Endothelial cell of umbilical vein (primary cell): ENCODE measurements at regions of chr17 and their contacts with region 1.

Region 1: GRCh38 chr17:64420143-64420971 is 28.6 kb upstream of the MILR1 start:
- DNase-seq: peak; percentile 76
- H3K4me3 ChIP-seq: no peak overlapping the region
- H3K27ac ChIP-seq: no peak overlapping the region
- H3K4me1 ChIP-seq: peaks cover 6% of the 10 kb centered on the region
- H3K27me3 ChIP-seq: no peaks in the 10 kb centered on the region
- CTCF ChIP-seq: peak; percentile 74 to 75
- POLR2A ChIP-seq: no peak

Region 2: GRCh38 chr17:64306850-64307463 is 113.4 kb before region 1 on chr17:
- CTCF ChIA-PET with region 1: interaction called, 203 read pairs
- POLR2A ChIA-PET with region 1: no interaction called
- dilution Hi-C with region 1: no loop called
- intact Hi-C with region 1: loop called (anchors 1 kb)
- DNase-seq: peak; percentile 84
- H3K4me3 ChIP-seq: no peak overlapping the region
- H3K27ac ChIP-seq: no peak overlapping the region
- H3K4me1 ChIP-seq: peaks cover 5% of the 10 kb centered on the region
- H3K27me3 ChIP-seq: no peaks in the 10 kb centered on the region
- CTCF ChIP-seq: peak; percentile 67 to 70
- POLR2A ChIP-seq: no peak

Region 3: GRCh38 chr17:64343853-64344637 is 76.3 kb before region 1 on chr17:
- CTCF ChIA-PET with region 1: interaction called, 16 read pairs
- POLR2A ChIA-PET with region 1: no interaction called
- dilution Hi-C with region 1: no loop called
- intact Hi-C with region 1: no loop called
- DNase-seq: peak; percentile 99
- H3K4me3 ChIP-seq: no peak overlapping the region
- H3K27ac ChIP-seq: peak overlapping the region; percentile 89
- H3K4me1 ChIP-seq: peaks cover 41% of the 10 kb centered on the region
- H3K27me3 ChIP-seq: no peaks in the 10 kb centered on the region
- CTCF ChIP-seq: no peak
- POLR2A ChIP-seq: peak; percentile 38

Region 4: DNA sequence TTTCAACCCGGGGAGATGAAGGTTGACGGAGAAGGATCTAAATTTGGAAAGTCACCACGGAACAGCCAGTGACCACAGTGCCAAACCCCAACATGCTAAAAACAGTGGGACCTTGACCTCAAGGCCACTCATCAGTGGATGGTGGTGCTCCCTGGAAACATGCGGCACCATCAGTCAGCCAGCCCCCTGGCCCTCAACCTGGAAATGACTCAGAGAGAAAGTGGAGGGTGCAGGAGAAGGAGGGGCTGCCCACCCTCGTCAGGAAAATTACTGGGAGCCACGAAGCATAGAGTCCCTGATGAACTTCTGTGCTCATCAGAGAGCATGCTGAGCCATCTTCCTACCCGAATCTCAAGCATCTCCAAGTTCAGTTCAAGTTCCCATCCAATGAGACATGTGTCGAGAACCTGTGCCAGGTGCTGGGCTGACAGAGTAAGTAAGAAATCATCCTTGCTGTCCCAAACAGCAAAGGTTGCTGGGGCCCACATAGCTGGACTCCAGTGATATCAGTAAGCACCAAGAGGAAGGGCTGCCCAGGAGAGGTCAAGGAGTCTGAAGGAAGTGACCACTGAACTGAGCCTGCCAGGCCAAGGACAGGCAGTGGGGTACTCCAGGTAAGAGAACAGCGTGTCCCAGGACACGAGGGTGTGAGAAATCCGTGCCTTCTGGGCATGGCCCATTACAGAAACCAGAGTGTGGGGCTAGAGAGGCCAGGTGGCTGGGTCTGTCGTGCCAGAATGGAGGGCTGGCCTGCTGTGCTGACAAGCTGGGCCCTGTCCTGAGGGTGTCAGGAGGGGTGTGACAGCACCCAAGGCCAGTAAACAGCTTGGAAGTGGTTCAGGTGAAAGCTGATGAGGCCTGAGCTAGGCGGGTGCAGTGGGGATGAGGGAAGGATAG is 34.9 kb before region 1 on chr17:
- CTCF ChIA-PET with region 1: interaction called, 60 read pairs
- POLR2A ChIA-PET with region 1: no interaction called
- dilution Hi-C with region 1: no loop called
- intact Hi-C with region 1: loop called (anchors 1 kb)
- DNase-seq: peak; percentile 96
- H3K4me3 ChIP-seq: peak overlapping the region in 2 of 3 experiments; percentile 10 to 27
- H3K27ac ChIP-seq: peak overlapping the region; percentile 98
- H3K4me1 ChIP-seq: peaks cover 73% of the 10 kb centered on the region
- H3K27me3 ChIP-seq: no peaks in the 10 kb centered on the region
- CTCF ChIP-seq: no peak
- POLR2A ChIP-seq: peak; percentile 41

Region 5: DNA sequence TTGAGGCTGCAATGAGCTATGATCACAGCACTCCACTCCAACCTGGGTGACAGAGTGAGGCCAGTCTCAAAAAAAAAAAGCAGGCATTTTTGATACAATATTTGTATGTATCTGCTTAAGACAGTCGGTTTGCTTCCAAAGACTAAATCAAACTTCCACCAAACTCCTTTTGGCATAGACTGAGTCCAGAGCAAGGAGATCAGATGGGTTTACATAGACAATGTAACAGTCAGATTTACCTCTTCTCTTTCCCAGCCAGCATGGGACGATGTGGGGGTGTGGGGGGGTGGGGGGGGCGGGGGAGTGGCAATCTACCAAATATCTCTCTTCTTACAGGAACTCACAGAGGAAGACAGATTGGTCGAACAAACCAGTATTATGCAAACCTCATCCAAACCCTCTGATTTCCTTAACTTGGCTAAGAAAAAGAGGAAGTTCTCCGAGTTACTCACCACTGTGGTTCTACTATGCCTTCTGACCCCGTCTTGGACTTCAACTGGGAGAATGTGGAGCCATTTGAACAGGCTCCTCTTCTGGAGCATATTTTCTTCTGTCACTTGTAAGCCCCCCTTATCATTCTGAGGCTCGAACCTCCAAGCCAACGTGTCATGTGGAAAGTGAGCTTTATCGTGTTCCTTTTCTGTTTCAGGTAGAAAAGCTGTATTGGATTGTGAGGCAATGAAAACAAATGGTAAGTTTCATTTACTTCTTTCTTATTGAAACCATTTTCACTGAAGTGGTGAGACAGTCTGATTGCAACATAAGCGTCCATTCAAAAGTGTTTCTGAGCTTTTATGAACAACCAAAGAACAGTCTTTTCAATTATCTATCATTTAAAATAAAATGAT is 28.5 kb after region 1 on chr17 and contains the start of gene MILR1:
- CTCF ChIA-PET with region 1: no interaction called
- POLR2A ChIA-PET with region 1: no interaction called
- dilution Hi-C with region 1: no loop called
- intact Hi-C with region 1: no loop called
- DNase-seq: peak; percentile 92
- H3K4me3 ChIP-seq: peak within 1 kb of the TSS in 2 of 3 experiments; percentile 19 to 46
- H3K27ac ChIP-seq: peak within 1 kb of the TSS; percentile 50
- H3K4me1 ChIP-seq: peaks cover 12% of the 10 kb centered on the region
- H3K27me3 ChIP-seq: no peaks in the 10 kb centered on the region
- CTCF ChIP-seq: no peak
- POLR2A ChIP-seq: peak; percentile 39
- total RNA-seq, gene MILR1: 1.2 and 1.6 TPM in 2 replicates

Region 6: DNA sequence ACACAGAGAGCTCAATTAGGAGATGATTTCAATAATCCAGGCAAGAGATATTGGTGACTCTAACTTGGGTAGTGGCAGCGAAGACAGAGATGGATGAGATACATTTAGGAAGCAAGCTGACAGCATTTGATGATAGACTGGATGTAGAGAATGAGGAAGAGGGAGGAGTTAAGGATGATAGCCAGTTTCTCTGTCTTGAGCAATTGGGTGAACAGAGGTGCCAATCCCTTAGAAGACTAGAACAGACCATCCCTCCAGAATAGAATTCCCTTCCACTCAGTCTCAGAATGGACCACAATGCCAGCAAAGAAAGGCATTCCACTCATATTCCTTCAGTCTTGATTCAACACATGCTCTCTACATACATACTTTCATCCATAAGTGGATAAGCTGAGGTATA is 59.3 kb after region 1 on chr17:
- CTCF ChIA-PET with region 1: interaction called, 61 read pairs
- POLR2A ChIA-PET with region 1: no interaction called
- dilution Hi-C with region 1: no loop called
- intact Hi-C with region 1: no loop called
- DNase-seq: no peak
- H3K4me3 ChIP-seq: no peak overlapping the region
- H3K27ac ChIP-seq: no peak overlapping the region
- H3K4me1 ChIP-seq: no peaks in the 10 kb centered on the region
- H3K27me3 ChIP-seq: no peaks in the 10 kb centered on the region
- CTCF ChIP-seq: no peak
- POLR2A ChIP-seq: no peak

Region 7: GRCh38 chr17:64534175-64534574 is 113.8 kb after region 1 on chr17:
- CTCF ChIA-PET with region 1: interaction called, 12 read pairs
- POLR2A ChIA-PET with region 1: no interaction called
- dilution Hi-C with region 1: no loop called
- intact Hi-C with region 1: no loop called
- DNase-seq: peak; percentile 44
- H3K4me3 ChIP-seq: no peak overlapping the region
- H3K27ac ChIP-seq: no peak overlapping the region
- H3K4me1 ChIP-seq: no peaks in the 10 kb centered on the region
- H3K27me3 ChIP-seq: no peaks in the 10 kb centered on the region
- CTCF ChIP-seq: peak in 1 of 2 donors; percentile 23
- POLR2A ChIP-seq: peak; percentile 47

Region 8: GRCh38 chr17:64622931-64623654 is 202.7 kb after region 1 on chr17:
- CTCF ChIA-PET with region 1: no interaction called
- POLR2A ChIA-PET with region 1: no interaction called
- dilution Hi-C with region 1: no loop called
- intact Hi-C with region 1: no loop called
- DNase-seq: peak; percentile 97
- H3K4me3 ChIP-seq: no peak overlapping the region
- H3K27ac ChIP-seq: peak overlapping the region; percentile 88
- H3K4me1 ChIP-seq: peaks cover 82% of the 10 kb centered on the region
- H3K27me3 ChIP-seq: no peaks in the 10 kb centered on the region
- CTCF ChIP-seq: no peak
- POLR2A ChIP-seq: no peak